ENCODE measurements at regions of chr19 and their contacts with region 1.

Region 1: GRCh38 chr19:18672606-18673337 is 10.7 kb upstream of the CRTC1 start:
- DNase-seq: no peak
- H3K4me3 ChIP-seq: peak overlapping the region in 1 of 2 donors; percentile 38
- H3K27ac ChIP-seq: peak overlapping the region; percentile 50 to 59
- H3K4me1 ChIP-seq: peaks cover 5 to 18% of the 10 kb centered on the region in 2 donors
- H3K27me3 ChIP-seq: no peaks in the 10 kb centered on the region
- CTCF ChIP-seq: peak; percentile 23 to 48 (median 25)

Region 2: DNA sequence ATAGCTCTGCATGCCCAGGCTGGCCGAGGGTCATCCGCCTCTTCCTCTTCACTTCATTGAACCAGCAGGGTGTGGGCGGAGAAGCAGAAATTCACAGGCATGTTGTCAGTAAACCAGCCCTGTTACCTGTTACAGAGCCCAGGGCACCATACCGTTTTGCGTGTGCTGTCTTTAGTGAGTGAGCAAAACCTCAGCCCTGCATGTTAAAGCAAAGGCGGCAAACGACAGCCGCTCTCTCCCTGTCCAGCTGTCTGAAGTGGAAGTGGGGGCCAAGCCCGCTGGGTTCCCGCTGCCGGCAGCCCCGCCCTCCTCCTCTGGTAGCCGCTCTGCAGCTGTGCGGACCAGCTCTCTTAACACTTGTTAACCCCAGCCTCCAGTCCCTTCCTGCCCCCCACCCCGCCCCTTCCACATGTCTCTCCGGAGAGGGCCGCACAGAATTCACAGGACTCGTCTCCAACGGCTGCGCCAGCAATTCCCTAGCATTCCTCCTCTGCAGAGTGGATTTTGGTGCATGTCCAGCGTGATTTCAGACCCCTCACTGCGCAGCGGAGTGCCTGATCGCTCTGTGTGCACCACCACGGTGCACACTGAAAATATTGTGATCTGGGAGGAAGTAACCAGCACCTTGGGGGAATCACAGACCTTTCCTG is 23.3 kb before region 1 on chr19:
- intact Hi-C with region 1: loop called (anchors 1 kb)
- DNase-seq: no peak
- H3K4me3 ChIP-seq: peak overlapping the region; percentile 5 to 45
- H3K27ac ChIP-seq: peak overlapping the region; percentile 93 to 94
- H3K4me1 ChIP-seq: peaks cover 18 to 53% of the 10 kb centered on the region in 2 donors
- H3K27me3 ChIP-seq: no peaks in the 10 kb centered on the region
- CTCF ChIP-seq: no peak

Measured in ascending aorta (tissue), 2 donors.